Uterus (tissue), 4 donors: ENCODE measurements at regions of chr11 and their contacts with region 1.

Region 1: DNA sequence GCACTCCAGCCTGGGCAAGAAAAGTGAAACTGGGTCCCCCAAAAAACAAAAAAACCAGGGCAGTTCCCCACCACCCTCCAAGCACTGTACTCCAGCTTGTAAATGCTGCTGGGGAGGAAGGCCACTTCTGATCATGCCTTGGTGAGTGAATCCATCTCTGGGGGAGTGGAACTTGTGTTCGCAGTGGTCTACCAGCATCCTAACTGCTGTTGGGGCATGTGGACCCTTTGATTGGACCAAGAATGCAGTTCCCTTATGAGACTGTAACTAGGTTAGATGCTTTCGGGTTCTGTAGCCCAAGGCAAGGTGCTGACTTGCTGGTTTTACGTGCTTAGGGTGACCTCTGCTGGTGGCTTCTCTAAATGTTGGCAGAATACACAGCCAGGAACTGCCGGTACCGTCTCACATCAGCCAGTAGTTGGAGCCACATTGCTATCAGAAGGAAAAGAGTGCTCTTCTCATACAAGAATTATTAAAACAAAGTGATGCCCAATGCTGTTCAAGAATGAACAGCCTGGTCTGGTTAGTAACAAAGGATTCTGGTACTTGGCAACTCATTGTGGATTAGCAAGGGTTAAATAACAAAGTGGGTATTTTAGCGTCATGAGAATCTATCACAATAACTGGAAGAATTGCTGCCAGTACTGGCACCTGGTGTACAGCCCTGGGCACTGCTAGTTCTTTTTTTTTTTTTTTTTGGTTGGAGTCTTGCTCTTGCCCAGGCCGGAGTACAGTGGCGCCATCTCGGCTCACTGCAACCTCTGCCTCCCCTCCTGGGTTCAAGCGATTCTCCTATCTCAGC is 13.0 kb downstream of the EIF1AD start:
- DNase-seq: peak; percentile 89 to 92
- H3K4me3 ChIP-seq: no peak overlapping the region
- H3K27ac ChIP-seq: no peak overlapping the region
- H3K4me1 ChIP-seq: no peaks in the 10 kb centered on the region
- H3K27me3 ChIP-seq: no peaks in the 10 kb centered on the region
- CTCF ChIP-seq: peak; percentile 89 to 99 (median 96)
- POLR2A ChIP-seq: peak in 1 of 2 donors; percentile 27

Region 2: GRCh38 chr11:65884686-65885092 is 104.3 kb before region 1 on chr11:
- intact Hi-C with region 1: loop called (anchors 5 kb)
- DNase-seq: peak; percentile 68 to 73
- H3K4me3 ChIP-seq: no peak overlapping the region
- H3K27ac ChIP-seq: peak overlapping the region; percentile 24 to 38
- H3K4me1 ChIP-seq: peaks cover 4 to 9% of the 10 kb centered on the region in 2 donors
- H3K27me3 ChIP-seq: no peaks in the 10 kb centered on the region
- CTCF ChIP-seq: peak; percentile 97 to 99 (median 98)
- POLR2A ChIP-seq: no peak

Region 3: GRCh38 chr11:65927904-65928397 is 61.0 kb before region 1 on chr11:
- intact Hi-C with region 1: no loop called
- DNase-seq: no peak
- H3K4me3 ChIP-seq: no peak overlapping the region
- H3K27ac ChIP-seq: no peak overlapping the region
- H3K4me1 ChIP-seq: no peaks in the 10 kb centered on the region
- H3K27me3 ChIP-seq: no peaks in the 10 kb centered on the region
- CTCF ChIP-seq: no peak
- POLR2A ChIP-seq: no peak